ENCODE measurements at regions of chr19 and their contacts with region 1.

Region 1: DNA sequence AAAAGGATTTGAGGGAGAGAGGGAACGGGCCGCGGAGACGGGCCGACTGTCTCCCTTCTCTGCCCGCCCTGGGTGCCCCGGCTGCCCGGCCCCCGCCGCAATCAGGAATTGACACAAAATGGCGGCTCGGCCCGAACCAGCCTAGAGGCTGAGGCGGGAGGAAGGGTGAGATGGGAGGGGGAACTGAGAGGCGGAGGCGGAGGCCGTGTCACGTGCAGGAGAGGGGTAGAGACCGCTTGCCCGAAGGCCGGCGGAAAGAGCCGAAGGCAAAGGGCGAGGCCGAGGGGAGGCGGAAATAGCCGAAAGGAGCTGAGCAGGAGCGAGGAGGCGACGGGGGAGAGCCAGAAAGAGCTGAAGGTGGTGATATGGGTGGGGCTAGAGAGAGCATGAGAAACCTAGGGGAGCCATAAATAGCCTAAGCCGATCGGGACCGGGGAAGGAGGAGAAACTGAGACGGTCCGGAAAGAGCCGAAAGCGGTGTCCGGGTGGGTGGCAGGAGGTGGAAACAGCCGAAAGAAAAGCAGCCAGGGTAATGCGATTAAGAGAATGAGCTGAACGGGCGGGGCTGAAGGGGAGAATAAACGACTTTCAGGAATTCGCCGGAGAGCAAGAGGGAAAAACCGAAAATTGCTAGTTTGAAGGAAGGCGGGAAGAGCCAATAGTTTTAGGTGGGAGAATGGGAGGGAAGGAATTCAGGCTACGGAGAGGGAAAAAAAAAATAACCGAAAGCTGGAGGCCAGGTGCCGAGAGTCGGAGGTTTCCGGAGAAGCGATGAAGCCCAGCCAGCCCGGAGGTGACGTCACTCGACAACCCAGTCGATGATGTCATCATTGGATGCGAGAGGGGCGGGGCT is at the start of gene ZC3H4:
- DNase-seq: peak; percentile 100
- H3K4me3 Mint-ChIP-seq: peak within 1 kb of the TSS; percentile 90
- H3K27ac Mint-ChIP-seq: peak within 1 kb of the TSS; percentile 100
- H3K4me1 Mint-ChIP-seq: peaks cover 32% of the 10 kb centered on the region
- H3K27me3 Mint-ChIP-seq: no peaks in the 10 kb centered on the region
- total RNA-seq, gene ZC3H4: 98.3 to 104 TPM

Region 2: GRCh38 chr19:46860125-46860845 is 252.9 kb before region 1 on chr19:
- CTCF ChIA-PET with region 1: no interaction called
- POLR2A ChIA-PET with region 1: interaction called, 10 read pairs
- DNase-seq: peak; percentile 97
- H3K4me3 Mint-ChIP-seq: peak overlapping the region; percentile 77
- H3K27ac Mint-ChIP-seq: peak overlapping the region; percentile 88
- H3K4me1 Mint-ChIP-seq: peaks cover 26% of the 10 kb centered on the region
- H3K27me3 Mint-ChIP-seq: no peaks in the 10 kb centered on the region

Region 3: GRCh38 chr19:47047763-47048405 is 65.3 kb before region 1 on chr19:
- CTCF ChIA-PET with region 1: interaction called, 3 read pairs
- POLR2A ChIA-PET with region 1: interaction called, 11 read pairs
- DNase-seq: peak; percentile 86
- H3K4me3 Mint-ChIP-seq: peak overlapping the region; percentile 99
- H3K27ac Mint-ChIP-seq: peak overlapping the region; percentile 92
- H3K4me1 Mint-ChIP-seq: peaks cover 19% of the 10 kb centered on the region
- H3K27me3 Mint-ChIP-seq: no peaks in the 10 kb centered on the region

Region 4: DNA sequence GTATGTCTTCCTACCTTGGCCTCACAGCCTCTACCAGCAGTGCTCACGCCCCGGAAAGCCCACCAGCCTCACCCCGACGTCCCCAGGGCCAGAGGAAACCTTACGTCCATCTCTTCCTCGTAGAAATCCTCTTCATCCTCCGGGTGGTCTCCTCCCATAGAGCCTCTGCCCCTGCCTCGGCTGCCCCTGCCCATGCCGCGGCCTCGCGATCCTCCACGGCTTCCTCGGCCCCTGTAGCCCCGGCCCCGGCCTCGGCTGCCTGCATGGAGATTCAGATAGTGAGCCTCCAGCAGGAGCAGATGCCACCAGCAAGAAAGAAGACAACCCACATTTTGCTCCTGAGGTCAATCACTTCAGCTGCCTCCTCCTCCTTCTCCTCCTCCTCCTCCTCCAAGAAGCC is 26.9 kb before region 1 on chr19:
- CTCF ChIA-PET with region 1: interaction called, 4 read pairs
- POLR2A ChIA-PET with region 1: interaction called, 704 read pairs
- DNase-seq: no peak
- H3K4me3 Mint-ChIP-seq: no peak overlapping the region
- H3K27ac Mint-ChIP-seq: peak overlapping the region; percentile 23
- H3K4me1 Mint-ChIP-seq: peaks cover 26% of the 10 kb centered on the region
- H3K27me3 Mint-ChIP-seq: no peaks in the 10 kb centered on the region

Region 5: GRCh38 chr19:47130591-47131227 is 17.5 kb after region 1 on chr19 and contains the start of gene SAE1:
- CTCF ChIA-PET with region 1: interaction called, 16 read pairs
- POLR2A ChIA-PET with region 1: interaction called, 88 read pairs
- DNase-seq: peak; percentile 94
- H3K4me3 Mint-ChIP-seq: peak within 1 kb of the TSS; percentile 97
- H3K27ac Mint-ChIP-seq: peak within 1 kb of the TSS; percentile 90
- H3K4me1 Mint-ChIP-seq: peaks cover 47% of the 10 kb centered on the region
- H3K27me3 Mint-ChIP-seq: no peaks in the 10 kb centered on the region
- total RNA-seq, gene SAE1: 150 TPM

Region 6: GRCh38 chr19:47225746-47226425 is 112.7 kb after region 1 on chr19:
- CTCF ChIA-PET with region 1: interaction called, 3 read pairs
- POLR2A ChIA-PET with region 1: interaction called, 18 read pairs
- DNase-seq: peak; percentile 88
- H3K4me3 Mint-ChIP-seq: peak overlapping the region; percentile 79
- H3K27ac Mint-ChIP-seq: peak overlapping the region; percentile 89
- H3K4me1 Mint-ChIP-seq: peaks cover 18% of the 10 kb centered on the region
- H3K27me3 Mint-ChIP-seq: no peaks in the 10 kb centered on the region

Region 7: GRCh38 chr19:47273313-47273977 is 160.2 kb after region 1 on chr19:
- CTCF ChIA-PET with region 1: interaction called, 3 read pairs
- POLR2A ChIA-PET with region 1: interaction called, 31 read pairs
- DNase-seq: peak; percentile 93
- H3K4me3 Mint-ChIP-seq: peak overlapping the region; percentile 98
- H3K27ac Mint-ChIP-seq: peak overlapping the region; percentile 99
- H3K4me1 Mint-ChIP-seq: peaks cover 21% of the 10 kb centered on the region
- H3K27me3 Mint-ChIP-seq: no peaks in the 10 kb centered on the region

Measured in activated CD4-positive, alpha-beta memory T cell treated with anti-CD3 and anti-CD28 coated beads, Interleukin-2, amount 10 ng/mL, durations not matched to agents 7 days and 5 days (primary cell).